ENCODE measurements at regions of chr19 and their contacts with region 1.

Region 1: GRCh38 chr19:16382775-16383543 is 58.3 kb downstream of the KLF2 start:
- DNase-seq: peak; percentile 94
- H3K4me3 ChIP-seq: peak overlapping the region in 1 of 4 donors; percentile 3
- H3K27ac ChIP-seq: peak overlapping the region; percentile 85 to 94 (median 90)
- H3K4me1 ChIP-seq: peaks cover 36 to 55% (median 46%) of the 10 kb centered on the region in 4 donors
- H3K27me3 ChIP-seq: no peaks in the 10 kb centered on the region
- CTCF ChIP-seq: peak; percentile 88 to 90 (median 89)
- EP300 ChIP-seq: no peak
- POLR2A ChIP-seq: no peak

Region 2: DNA sequence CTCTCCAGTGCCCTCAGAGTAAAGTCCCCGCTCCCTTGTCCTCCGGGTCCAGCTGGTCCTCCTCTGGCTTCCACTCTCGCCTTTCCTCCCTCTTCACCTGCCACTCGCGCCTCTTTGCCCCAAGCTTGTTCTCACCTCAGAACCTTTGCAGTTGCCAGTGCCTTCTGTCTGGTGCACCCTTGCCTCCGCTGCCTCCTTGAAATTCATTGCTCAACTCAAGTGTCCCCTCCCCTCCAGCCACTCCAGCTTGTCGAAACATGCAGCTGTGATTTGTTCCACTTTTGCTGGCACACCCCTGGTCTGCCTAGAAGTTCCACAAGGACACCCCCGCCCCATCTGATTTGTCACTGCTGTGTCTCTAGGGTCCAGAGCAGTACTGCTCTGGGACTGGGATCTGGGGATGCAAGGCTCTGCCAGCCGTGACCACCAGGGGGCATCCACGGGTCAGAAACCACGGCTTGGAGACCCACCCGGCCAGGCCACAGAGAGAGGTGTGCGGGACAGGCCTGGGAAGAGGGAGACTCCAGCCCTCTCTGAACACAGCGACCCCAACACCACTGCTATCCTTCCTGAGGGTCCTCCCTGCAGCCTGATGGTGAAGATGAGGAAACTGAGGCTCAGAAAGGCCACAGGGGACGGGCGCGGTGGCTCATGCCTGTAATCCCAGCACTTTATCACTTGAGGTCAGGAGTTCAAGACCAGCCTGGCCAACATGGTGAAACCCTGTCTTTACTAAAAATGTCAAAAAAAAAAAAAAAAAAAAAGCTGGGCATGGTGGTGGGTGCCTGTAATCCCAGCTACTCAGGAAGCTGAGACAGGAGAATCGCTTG is 135.4 kb before region 1 on chr19:
- intact Hi-C with region 1: loop called (anchors 1 kb)
- DNase-seq: peak; percentile 97
- H3K4me3 ChIP-seq: no peak overlapping the region
- H3K27ac ChIP-seq: peak overlapping the region in 1 of 4 donors; percentile 43
- H3K4me1 ChIP-seq: peaks cover 11 to 15% (median 12%) of the 10 kb centered on the region in 4 donors
- H3K27me3 ChIP-seq: no peaks in the 10 kb centered on the region
- CTCF ChIP-seq: peak in 2 of 3 experiments; percentile 97 to 98
- EP300 ChIP-seq: no peak
- POLR2A ChIP-seq: no peak

Region 3: DNA sequence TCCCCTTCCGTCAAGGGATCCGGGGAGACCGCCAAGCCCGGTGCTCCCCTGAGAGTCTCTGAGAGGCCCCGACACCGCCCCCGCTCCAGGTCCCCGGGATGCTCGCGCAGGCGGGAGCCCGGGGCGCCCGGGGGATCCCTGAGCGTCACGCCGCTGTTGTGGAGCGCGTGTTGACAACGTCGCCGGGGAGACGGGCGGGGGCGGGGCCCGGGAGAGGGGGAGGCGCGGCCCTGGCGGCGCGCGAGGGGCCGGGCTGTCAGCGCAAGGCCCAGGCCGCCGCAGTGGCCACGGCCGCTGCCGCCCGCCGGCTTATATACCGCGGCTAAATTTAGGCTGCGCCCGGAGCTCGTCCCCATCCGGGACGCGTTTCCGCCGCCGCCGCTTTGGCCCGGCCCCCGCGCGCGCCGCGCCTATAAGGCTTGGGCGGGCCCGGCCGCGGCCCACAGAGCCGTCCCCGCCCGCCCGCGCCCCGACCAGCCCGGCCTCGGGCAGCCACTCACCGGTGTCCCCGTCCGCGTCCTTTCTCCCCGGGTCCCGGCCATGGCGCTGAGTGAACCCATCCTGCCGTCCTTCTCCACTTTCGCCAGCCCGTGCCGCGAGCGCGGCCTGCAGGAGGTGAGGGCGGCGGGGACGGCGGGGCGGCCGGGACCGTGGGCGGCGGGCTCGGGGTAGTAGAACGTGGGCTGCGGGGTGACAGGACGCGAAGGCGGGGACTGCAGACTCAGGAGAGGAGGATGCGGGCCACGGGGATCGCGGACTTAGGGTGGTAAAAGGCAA is 58.4 kb before region 1 on chr19 and contains the start of gene KLF2:
- intact Hi-C with region 1: loop called (anchors 5 kb)
- DNase-seq: peak; percentile 97
- H3K4me3 ChIP-seq: peak within 1 kb of the TSS; percentile 78 to 98 (median 84)
- H3K27ac ChIP-seq: peak within 1 kb of the TSS; percentile 97 to 99 (median 98)
- H3K4me1 ChIP-seq: peaks cover 18 to 44% (median 41%) of the 10 kb centered on the region in 4 donors
- H3K27me3 ChIP-seq: peaks cover 0 to 6% (median 0%) of the 10 kb centered on the region in 4 donors
- CTCF ChIP-seq: peak in 1 of 3 experiments; percentile 8
- EP300 ChIP-seq: no peak
- POLR2A ChIP-seq: peak; percentile 91
- total RNA-seq, gene KLF2: 64.9 to 74.1 (median 68.5) TPM

Region 4: DNA sequence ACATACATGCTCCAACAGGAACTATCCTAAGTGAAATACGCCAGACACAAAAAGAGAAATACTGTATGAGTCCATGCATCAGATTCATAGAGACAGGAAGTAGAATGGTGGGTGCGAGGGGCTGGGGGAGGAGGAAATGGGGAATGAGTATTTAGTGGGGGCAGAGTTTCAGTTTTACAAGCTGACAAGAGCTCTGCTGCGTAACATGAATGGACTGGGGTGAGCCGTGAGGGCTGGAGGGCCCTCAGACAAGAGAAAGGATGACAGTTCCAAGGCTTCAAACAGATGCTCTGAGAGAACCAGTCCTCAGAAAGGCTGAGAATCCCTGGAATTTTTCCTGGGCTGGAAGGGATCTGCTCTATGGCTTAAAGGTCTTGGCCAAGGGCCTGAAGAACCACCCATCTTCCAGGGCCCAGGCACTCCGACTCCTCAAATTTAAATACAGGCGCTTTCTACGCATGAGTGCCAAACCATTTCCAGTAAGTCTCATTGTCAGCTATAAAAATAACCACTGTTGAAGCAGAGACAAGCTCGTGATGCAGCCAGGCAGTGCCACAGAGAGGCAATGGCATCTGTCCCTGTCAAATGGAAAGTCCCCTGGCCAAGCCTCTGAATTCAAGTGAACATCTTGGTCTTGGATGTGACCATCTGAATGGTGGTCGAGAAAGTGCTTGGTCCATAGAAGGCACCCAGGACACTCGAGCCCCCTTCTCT is 40.8 kb before region 1 on chr19:
- intact Hi-C with region 1: loop called (anchors 5 kb)
- DNase-seq: no peak
- H3K4me3 ChIP-seq: no peak overlapping the region
- H3K27ac ChIP-seq: peak overlapping the region; percentile 85 to 87 (median 86)
- H3K4me1 ChIP-seq: peaks cover 57 to 77% (median 60%) of the 10 kb centered on the region in 4 donors
- H3K27me3 ChIP-seq: no peaks in the 10 kb centered on the region
- CTCF ChIP-seq: no peak
- EP300 ChIP-seq: peak; percentile 73
- POLR2A ChIP-seq: no peak

Measured in esophagus muscularis mucosa (tissue), 4 donors.